ENCODE measurements at regions of chr3 and their contacts with region 1.

Region 1: DNA sequence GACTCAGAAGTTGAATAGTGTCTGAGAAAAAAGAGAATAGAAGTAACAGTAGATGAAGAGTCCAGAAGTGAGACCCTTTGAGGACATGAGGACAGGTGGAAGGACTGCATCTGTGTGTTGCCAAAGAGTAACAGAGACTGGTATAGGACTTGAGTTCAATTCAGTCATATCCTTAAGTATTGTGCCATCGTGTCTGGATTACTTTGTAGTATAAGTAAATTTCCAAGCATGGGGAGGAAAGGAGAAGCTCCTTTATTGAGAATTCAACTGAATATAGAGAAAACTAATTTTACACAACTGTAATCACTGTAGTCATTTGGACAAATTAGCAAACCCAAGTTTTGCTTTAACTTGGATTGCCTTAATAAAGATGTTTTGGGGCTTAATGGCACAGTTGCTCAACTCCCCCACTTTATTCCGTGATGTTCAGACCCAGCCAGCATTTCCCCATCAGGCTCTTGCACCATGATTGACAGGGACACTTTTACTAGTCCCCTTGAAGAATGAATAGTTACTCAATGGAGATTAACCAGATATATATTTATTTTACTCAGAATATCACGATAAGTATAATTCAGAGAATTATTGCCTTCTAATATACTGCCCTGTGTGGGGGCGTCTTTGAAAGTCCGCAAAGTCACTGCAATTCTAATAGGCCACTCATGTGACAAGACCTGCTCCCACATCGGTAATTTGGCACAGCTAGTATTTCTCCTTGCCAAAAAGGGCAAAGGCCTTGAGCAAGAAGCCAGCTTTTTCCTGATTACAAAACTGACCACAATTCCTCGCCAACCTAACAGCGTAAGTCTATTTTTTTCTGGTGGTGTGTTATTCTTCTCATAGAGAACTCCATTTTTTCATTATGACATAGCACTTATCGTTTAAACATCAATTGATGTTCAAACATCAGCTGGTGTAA is 61.3 kb downstream of the PPARG start:
- DNase-seq: peak; percentile 66 to 88 (median 74)
- H3K4me3 ChIP-seq: no peak overlapping the region
- H3K4me3 Mint-ChIP-seq: no peak overlapping the region
- H3K27ac ChIP-seq: peak overlapping the region; percentile 6 to 52
- H3K27ac Mint-ChIP-seq: peak overlapping the region; percentile 84 to 93 (median 89)
- H3K4me1 ChIP-seq: peaks cover 55 to 62% of the 10 kb centered on the region in 2 donors
- H3K4me1 Mint-ChIP-seq: peaks cover 63% of the 10 kb centered on the region
- H3K27me3 ChIP-seq: no peaks in the 10 kb centered on the region
- H3K27me3 Mint-ChIP-seq: peaks cover 0 to 2% (median 0%) of the 10 kb centered on the region in 3 donors
- CTCF ChIP-seq: no peak

Region 2: DNA sequence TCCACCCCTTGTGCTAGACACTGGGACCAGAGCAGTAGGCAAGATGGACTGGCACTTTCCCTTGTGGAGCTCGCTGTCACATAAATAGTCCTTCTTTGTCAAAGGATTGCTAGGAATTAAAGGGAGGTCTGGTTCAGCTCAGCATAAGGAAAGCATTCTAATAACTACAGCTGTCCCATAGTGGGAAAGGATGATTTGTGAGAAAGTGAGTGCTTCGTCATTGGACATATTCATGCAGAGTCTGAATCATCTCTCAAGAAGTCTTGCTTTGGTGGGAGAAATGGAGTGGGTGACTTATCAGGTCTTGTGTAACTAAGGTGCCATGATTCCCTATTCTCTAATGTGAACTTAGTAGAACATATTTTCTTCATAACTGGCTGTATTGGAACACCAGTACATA is 46.6 kb before region 1 on chr3:
- intact Hi-C with region 1: loop called in 1 of 2 experiments (anchors 5 kb)
- DNase-seq: peak; percentile 87 to 97 (median 95)
- H3K4me3 ChIP-seq: no peak overlapping the region
- H3K4me3 Mint-ChIP-seq: no peak overlapping the region
- H3K27ac ChIP-seq: peak overlapping the region; percentile 81 to 90
- H3K27ac Mint-ChIP-seq: peak overlapping the region; percentile 85 to 98 (median 94)
- H3K4me1 ChIP-seq: peaks cover 17 to 20% of the 10 kb centered on the region in 2 donors
- H3K4me1 Mint-ChIP-seq: peaks cover 37% of the 10 kb centered on the region
- H3K27me3 ChIP-seq: no peaks in the 10 kb centered on the region
- H3K27me3 Mint-ChIP-seq: peaks cover 0 to 10% (median 0%) of the 10 kb centered on the region in 3 donors
- CTCF ChIP-seq: no peak

Region 3: DNA sequence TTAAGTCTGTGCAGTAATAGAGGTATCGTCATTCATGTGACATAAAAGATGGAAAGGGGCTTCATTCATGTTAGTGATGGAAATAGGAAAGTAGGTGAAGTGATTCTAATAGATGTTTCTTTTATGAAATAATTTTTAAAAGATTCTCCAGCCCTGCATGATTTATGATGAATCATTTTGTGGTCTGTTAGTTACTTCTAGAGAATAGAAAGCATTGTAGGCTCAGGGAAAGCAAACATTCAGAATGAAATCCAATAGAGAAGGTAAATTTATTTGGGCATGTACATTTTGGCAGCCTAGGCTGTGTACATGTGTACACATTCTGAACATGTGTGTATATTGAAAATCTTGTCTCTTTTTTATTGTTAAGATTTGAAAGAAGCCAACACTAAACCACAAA is 38.1 kb before region 1 on chr3:
- intact Hi-C with region 1: loop called in 1 of 2 experiments (anchors 5 kb)
- DNase-seq: no peak
- H3K4me3 ChIP-seq: no peak overlapping the region
- H3K4me3 Mint-ChIP-seq: no peak overlapping the region
- H3K27ac ChIP-seq: no peak overlapping the region
- H3K27ac Mint-ChIP-seq: peak overlapping the region in 1 of 7 donors; percentile 17
- H3K4me1 ChIP-seq: no peaks in the 10 kb centered on the region
- H3K4me1 Mint-ChIP-seq: peaks cover 20% of the 10 kb centered on the region
- H3K27me3 ChIP-seq: no peaks in the 10 kb centered on the region
- H3K27me3 Mint-ChIP-seq: peaks cover 0 to 4% (median 0%) of the 10 kb centered on the region in 3 donors
- CTCF ChIP-seq: no peak